Ascending aorta (tissue), 2 donors: ENCODE measurements at regions of chr3 and their contacts with region 1.

Region 1: DNA sequence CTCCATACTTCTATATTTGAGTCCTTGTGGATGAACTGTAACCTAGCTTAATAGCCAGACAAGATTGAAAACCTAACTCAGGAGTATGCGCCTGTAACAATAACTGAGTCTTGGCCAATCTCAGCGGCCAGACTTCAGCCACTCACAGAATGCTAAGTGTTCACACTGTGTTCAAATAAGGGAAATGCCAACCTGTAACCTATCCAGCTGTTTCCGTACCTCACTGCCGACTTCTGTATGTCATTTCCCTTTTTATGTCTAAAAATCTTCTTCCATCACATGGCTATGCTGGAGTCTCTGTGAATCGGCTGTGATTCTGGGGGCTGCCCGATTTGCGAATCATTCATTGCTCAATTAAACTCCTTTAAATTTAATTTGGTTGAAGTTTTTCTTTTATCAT is 169.2 kb downstream of the NFKBIZ start:
- DNase-seq: no peak
- H3K4me3 ChIP-seq: no peak overlapping the region
- H3K27ac ChIP-seq: no peak overlapping the region
- H3K4me1 ChIP-seq: no peaks in the 10 kb centered on the region
- H3K27me3 ChIP-seq: no peaks in the 10 kb centered on the region
- CTCF ChIP-seq: no peak

Region 2: DNA sequence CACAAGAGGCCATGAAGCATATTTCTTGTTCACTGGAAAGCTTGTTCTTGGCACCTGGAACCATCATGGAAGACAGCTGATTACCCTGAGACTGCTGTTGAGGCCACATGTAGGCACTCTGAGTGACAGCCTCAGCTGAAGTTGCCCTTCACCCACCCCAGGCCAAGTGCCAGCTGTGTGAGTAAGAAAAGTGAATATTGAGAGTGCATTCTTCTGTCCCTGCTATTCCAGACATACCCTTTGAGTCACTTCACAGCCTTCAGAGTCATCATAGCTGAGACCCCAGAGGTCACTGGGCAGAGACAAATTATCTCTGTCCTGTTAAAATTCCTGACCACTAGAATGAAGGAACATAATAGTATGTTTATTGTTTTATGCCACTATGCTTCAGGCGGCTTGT is 89.7 kb before region 1 on chr3:
- intact Hi-C with region 1: no loop called
- DNase-seq: no peak
- H3K4me3 ChIP-seq: no peak overlapping the region
- H3K27ac ChIP-seq: no peak overlapping the region
- H3K4me1 ChIP-seq: no peaks in the 10 kb centered on the region
- H3K27me3 ChIP-seq: no peaks in the 10 kb centered on the region
- CTCF ChIP-seq: no peak

Region 3: GRCh38 chr3:101970913-101971312 is 47.6 kb before region 1 on chr3:
- intact Hi-C with region 1: loop called (anchors 1 kb)
- DNase-seq: no peak
- H3K4me3 ChIP-seq: no peak overlapping the region
- H3K27ac ChIP-seq: no peak overlapping the region
- H3K4me1 ChIP-seq: no peaks in the 10 kb centered on the region
- H3K27me3 ChIP-seq: no peaks in the 10 kb centered on the region
- CTCF ChIP-seq: no peak

Region 4: DNA sequence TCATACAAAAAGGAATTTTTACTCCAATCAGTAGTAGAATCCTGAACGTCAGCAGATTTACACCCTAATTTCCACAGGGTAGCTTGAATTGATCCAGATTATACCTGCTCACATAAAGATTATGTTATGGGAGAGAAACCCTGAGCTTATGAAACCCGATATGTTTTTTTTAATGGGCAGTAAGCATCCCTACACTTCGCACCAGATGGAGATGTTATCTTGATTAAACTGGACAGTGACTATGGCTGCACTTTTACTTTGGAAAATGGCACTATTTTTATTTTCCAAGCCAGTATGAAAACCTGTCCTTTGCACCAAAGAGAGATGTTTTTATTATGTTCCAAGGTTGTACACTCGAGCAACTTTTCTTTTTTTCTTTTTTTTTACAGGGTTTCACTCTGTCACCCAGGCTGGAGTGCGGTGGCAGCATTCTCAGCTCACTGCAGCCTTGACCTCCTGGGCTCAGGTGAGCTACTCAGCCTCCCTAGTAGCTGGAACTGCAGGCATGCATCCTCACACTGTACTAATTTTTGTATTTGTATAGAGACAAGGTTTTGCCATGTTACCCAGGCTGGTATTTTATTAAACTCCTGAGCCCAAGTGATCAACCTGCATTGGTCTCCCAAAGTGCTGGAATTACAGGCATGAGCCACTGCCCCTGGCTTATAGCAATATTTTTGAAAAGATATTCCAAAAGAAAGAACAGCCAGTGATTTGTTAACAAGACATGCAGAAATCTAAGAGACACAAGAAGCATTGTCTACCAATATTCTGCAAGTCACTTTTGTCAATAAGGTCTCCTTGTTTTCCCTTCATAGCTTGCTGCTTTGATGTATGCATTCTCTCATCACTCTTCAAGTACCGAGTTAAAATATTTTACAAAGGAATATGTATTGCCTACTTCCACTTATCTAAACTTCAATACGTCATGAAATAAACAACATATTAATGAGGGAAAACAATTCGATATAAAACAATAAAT is 1828.8 kb after region 1 on chr3:
- intact Hi-C with region 1: no loop called
- DNase-seq: no peak
- H3K4me3 ChIP-seq: no peak overlapping the region
- H3K27ac ChIP-seq: no peak overlapping the region
- H3K4me1 ChIP-seq: no peaks in the 10 kb centered on the region
- H3K27me3 ChIP-seq: no peaks in the 10 kb centered on the region
- CTCF ChIP-seq: no peak